ENCODE measurements at regions of chr4 and their contacts with region 1.

Region 1: GRCh38 chr4:165580351-165580905 is 201.6 kb downstream of the CPE start:
- DNase-seq: peak; percentile 92
- H3K4me3 Mint-ChIP-seq: peak overlapping the region; percentile 38
- H3K27ac Mint-ChIP-seq: peak overlapping the region; percentile 13
- H3K4me1 Mint-ChIP-seq: peaks cover 47% of the 10 kb centered on the region
- H3K27me3 Mint-ChIP-seq: no peaks in the 10 kb centered on the region
- CTCF ChIP-seq: no peak

Region 2: DNA sequence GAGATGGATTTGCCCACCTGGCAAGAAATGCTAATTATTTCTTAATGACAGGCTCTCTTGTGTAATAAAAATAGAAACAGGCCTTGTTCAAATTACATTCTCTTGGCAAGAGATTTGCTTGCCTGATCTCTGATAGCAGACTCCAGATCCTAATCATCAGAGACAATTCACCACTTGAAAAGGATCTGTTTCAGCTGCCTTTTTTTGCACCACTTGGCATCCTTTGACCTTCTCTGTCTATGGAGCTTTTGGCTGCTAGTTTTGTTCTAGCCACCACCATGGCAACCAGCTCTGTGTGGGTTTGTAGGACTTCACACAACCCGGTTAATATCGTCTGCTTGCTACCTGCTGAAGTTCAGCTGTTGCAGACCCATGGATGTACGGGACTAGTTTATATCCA is 51.5 kb after region 1 on chr4:
- CTCF ChIA-PET with region 1: no interaction called
- POLR2A ChIA-PET with region 1: interaction called, 22 read pairs
- intact Hi-C with region 1: no loop called
- DNase-seq: no peak
- H3K4me3 Mint-ChIP-seq: no peak overlapping the region
- H3K27ac Mint-ChIP-seq: peak overlapping the region; percentile 90
- H3K4me1 Mint-ChIP-seq: peaks cover 18% of the 10 kb centered on the region
- H3K27me3 Mint-ChIP-seq: no peaks in the 10 kb centered on the region
- CTCF ChIP-seq: no peak

Region 3: GRCh38 chr4:165738571-165738970 is 158.1 kb after region 1 on chr4:
- CTCF ChIA-PET with region 1: no interaction called
- POLR2A ChIA-PET with region 1: interaction called, 32 read pairs
- intact Hi-C with region 1: no loop called
- DNase-seq: peak; percentile 60
- H3K4me3 Mint-ChIP-seq: peak overlapping the region; percentile 66
- H3K27ac Mint-ChIP-seq: peak overlapping the region; percentile 93
- H3K4me1 Mint-ChIP-seq: peaks cover 20% of the 10 kb centered on the region
- H3K27me3 Mint-ChIP-seq: no peaks in the 10 kb centered on the region
- CTCF ChIP-seq: no peak

Region 4: GRCh38 chr4:165744370-165744769 is 163.9 kb after region 1 on chr4:
- CTCF ChIA-PET with region 1: no interaction called
- POLR2A ChIA-PET with region 1: interaction called, 32 read pairs
- intact Hi-C with region 1: no loop called
- DNase-seq: no peak
- H3K4me3 Mint-ChIP-seq: no peak overlapping the region
- H3K27ac Mint-ChIP-seq: no peak overlapping the region
- H3K4me1 Mint-ChIP-seq: peaks cover 17% of the 10 kb centered on the region
- H3K27me3 Mint-ChIP-seq: no peaks in the 10 kb centered on the region
- CTCF ChIP-seq: no peak